Right ventricle myocardium inferior (tissue), 1 donor: ENCODE measurements at regions of chr11 and their contacts with region 1.

Region 1: GRCh38 chr11:17389211-17389956 is 925 bp upstream of the KCNJ11 start:
- DNase-seq: no peak
- ATAC-seq: peak; percentile 70

Region 2: DNA sequence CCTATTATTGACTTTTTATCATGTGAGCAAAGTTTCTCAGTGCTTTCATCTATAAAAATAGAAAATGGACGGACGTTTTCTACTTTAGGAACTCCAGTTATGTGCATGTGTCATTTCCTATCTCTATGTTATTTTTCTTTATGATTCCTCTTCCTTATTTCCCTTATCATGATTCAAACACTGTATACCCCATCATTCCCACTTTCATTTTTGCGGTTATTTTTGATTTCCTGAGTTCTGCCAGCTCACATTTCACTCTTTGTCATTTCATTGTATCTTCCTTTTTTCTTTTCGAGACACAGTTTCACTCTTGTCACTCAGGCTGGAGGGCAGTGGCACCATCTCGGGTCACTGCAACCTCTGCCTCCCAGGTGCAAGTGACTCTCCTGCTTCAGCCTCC is 629.5 kb before region 1 on chr11:
- intact Hi-C with region 1: no loop called
- DNase-seq: no peak
- ATAC-seq: no peak

Region 3: DNA sequence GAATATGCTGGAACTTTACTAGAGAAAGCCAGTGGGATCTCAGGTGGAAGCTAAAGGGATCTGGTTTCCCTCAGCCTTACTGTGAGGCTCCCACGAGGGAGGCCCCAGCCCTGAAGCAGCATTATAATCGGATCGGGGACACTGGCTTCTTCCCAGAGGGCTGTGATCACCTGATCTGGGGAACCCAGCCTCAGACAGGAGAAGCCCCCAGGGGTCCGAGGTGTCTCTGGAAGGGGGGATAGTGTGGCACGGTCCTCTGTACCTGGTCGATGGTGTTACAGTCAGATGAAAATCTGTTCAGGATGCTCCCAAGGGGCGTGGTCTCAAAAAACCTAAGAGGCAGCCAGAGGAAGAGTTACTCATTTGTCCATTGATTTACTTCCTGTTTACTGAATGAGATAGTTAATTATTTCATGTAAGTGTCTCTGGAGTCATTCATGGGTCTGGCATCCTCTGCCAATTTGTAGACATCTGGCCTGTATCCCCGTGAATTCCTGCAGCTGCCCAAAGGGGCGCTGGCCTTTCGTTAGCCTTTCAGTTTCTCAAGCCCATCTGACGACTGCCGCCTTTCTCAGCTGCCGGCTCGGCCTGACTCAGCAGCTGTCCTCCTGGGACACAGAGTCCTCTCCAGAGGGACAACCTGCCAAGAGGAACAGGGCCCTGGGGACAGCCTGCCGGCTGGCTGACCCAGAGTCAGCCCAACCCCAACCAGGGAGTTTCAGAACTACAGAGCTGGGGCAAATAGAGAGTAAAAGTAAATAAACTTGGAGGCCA is 16.0 kb after region 1 on chr11:
- intact Hi-C with region 1: loop called (anchors 2 kb)
- DNase-seq: peak; percentile 83
- ATAC-seq: peak; percentile 93

Region 4: GRCh38 chr11:17479284-17480214 is 90.2 kb after region 1 on chr11:
- intact Hi-C with region 1: loop called (anchors 1 kb)
- DNase-seq: no peak
- ATAC-seq: peak; percentile 64

Region 5: DNA sequence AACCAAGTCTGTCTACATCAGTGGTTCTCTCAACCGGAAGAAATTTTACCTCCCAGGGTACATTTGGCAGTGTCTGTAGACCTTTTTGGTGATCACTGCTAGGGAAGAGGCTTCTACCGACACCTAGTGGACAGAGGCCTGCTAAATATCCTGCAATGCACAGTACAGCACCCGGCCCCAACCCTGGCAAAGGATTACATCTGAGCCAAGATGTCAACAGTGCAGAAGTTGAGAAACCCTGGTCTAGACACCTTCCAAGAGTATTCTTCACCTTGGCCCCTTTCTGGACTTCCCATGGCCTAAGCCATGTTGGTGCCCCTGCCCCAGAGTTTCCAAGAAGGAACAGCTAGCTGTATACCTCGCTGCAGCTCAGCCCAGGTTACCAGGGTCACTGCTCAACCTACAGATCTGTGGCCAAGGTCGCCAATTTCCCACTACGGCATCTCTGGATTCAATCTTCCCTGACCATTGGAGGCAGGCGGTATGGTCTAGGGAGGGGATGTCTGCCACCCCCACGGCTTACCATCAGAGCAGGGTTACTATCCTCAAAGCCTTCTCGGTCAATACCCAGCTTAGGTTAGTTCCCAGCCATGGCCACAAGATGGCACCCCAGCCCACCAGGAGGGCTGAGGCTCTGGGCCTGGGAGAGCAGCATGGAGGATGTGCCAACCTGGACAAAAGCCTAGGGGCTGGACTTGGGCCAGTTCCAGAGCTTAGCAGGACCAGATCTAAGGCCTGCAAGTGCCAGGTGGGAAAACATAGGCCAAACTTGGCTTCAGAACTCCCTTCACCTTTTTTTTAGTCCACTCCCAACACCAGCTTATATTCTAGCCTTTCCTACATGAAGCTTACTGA is 341.5 kb after region 1 on chr11:
- intact Hi-C with region 1: no loop called
- DNase-seq: peak; percentile 73
- ATAC-seq: peak; percentile 88